GM13977 (cell line): ENCODE measurements at regions of chr6 and their contacts with region 1.

Region 1: GRCh38 chr6:148177589-148178233 is 164.9 kb upstream of the SASH1 start:
- DNase-seq: peak; percentile 50
- CTCF ChIP-seq: peak; percentile 73

Region 2: DNA sequence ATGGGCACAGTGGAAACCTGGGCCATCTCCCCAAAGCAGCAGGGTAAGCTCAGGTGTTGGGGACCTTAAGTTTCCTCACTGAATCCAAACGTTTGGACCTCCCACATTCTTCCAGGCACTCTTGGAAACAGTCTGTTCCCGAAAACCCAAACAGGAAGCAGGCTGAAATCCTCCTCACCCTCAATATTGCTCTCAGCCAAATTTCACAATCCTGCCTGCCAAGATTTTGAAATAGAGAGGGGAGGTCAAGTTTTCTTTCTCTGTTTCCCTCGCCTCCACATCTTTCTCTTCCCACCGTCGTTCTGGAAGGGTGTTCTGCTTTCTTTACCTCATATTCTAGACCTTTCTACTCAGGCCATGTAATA is 227.1 kb before region 1 on chr6:
- in situ Hi-C with region 1: no loop called
- DNase-seq: no peak
- CTCF ChIP-seq: no peak

Region 3: GRCh38 chr6:148016013-148016412 is 161.7 kb before region 1 on chr6:
- in situ Hi-C with region 1: no loop called
- DNase-seq: no peak
- CTCF ChIP-seq: no peak

Region 4: DNA sequence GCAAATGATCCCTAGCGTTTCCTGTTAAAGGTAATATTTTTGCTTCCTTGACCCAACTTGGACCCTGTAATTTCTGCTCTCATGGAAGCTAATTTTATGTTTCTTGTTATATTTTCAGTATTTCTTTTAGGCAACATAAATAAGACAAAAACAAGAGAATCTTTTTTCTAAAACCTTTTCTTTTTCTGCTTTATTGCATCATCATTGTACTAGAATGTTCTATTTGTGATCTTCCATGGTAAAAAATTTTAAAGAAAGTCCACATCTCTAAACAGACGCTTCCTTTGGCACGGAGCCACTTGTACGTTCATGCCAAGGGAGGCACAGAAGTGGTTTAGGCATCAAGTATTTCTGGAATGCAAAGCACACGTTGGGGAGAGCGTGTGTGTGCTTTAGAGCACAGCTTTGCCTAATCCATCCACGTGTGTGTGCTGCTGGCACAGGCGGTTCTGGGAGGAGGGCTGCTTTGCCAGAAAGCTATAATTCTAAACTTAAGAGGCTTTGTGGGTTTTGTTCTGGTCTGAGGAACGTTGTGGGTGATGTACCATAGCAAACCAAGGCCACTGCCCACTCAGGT is 263.3 kb after region 1 on chr6:
- in situ Hi-C with region 1: loop called (anchors 25 kb)
- DNase-seq: no peak
- CTCF ChIP-seq: no peak